ENCODE measurements at regions of chr20 and their contacts with region 1.

Region 1: GRCh38 chr20:50085452-50086365 is 27.2 kb downstream of the UBE2V1 start:
- DNase-seq: peak; percentile 77

Region 2: GRCh38 chr20:50107192-50107591 is 21.5 kb after region 1 on chr20:
- CTCF ChIA-PET with region 1: interaction called, 11 read pairs
- POLR2A ChIA-PET with region 1: no interaction called
- DNase-seq: no peak

Measured in HEK293T (cell line).